Posterior vena cava (tissue), 2 donors: ENCODE measurements at regions of chr16 and their contacts with region 1.

Region 1: DNA sequence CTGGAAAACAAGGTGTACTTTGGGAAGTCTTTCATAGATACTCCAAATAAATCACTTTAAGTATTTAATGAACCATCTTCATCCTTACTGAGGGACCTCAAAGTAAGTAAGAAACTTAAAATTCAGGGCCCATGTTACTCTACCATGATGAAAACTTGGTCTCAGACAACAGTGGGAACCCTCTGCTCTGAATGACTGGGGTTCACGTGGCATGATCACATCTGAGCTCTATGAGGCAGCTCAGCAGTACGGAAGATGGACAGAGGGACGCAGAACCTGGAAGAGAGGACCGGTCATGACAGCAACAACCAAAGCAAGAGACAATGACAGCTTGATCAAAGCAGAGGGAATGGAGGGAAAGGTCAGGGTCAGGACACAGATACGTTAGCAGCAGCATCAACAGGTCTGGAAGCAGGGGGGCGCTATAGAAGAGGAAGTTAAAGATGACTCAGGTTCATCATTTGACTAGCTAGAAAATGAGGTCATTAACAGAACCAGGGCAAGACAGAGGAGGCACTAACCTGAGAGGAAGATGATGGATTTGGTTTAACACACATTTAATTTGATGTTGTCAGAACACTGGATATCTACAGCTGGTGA is 9.5 kb downstream of the XPO6 start:
- DNase-seq: no peak

Region 2: GRCh38 chr16:28110479-28110878 is 91.8 kb before region 1 on chr16:
- intact Hi-C with region 1: no loop called
- DNase-seq: no peak

Region 3: GRCh38 chr16:28136751-28137434 is 65.4 kb before region 1 on chr16:
- intact Hi-C with region 1: loop called in 1 of 2 experiments (anchors 10 kb)
- DNase-seq: no peak

Region 4: GRCh38 chr16:28277537-28278388 is 75.5 kb after region 1 on chr16:
- intact Hi-C with region 1: no loop called
- DNase-seq: peak; percentile 96